Transverse colon (tissue), 4 donors: ENCODE measurements at regions of chr7 and their contacts with region 1.

Region 1: GRCh38 chr7:18345641-18346234 is 149.8 kb upstream of the HDAC9 start:
- DNase-seq: peak; percentile 33
- H3K4me3 ChIP-seq: no peak overlapping the region
- H3K27ac ChIP-seq: no peak overlapping the region
- H3K4me1 ChIP-seq: no peaks in the 10 kb centered on the region
- H3K27me3 ChIP-seq: no peaks in the 10 kb centered on the region
- CTCF ChIP-seq: peak; percentile 74 to 84 (median 79)
- EP300 ChIP-seq: no peak
- POLR2A ChIP-seq: no peak

Region 2: GRCh38 chr7:17275749-17276671 is 1069.7 kb before region 1 on chr7:
- in situ Hi-C with region 1: no loop called
- intact Hi-C with region 1: no loop called
- DNase-seq: no peak
- H3K4me3 ChIP-seq: no peak overlapping the region
- H3K27ac ChIP-seq: peak overlapping the region; percentile 28 to 42 (median 38)
- H3K4me1 ChIP-seq: peaks cover 0 to 10% (median 3%) of the 10 kb centered on the region in 4 donors
- H3K27me3 ChIP-seq: no peaks in the 10 kb centered on the region
- CTCF ChIP-seq: no peak
- EP300 ChIP-seq: no peak
- POLR2A ChIP-seq: no peak

Region 3: GRCh38 chr7:17706734-17707133 is 639.0 kb before region 1 on chr7:
- in situ Hi-C with region 1: loop called in 1 of 4 experiments (anchors 25 kb)
- intact Hi-C with region 1: no loop called
- DNase-seq: peak; percentile 16
- H3K4me3 ChIP-seq: no peak overlapping the region
- H3K27ac ChIP-seq: no peak overlapping the region
- H3K4me1 ChIP-seq: no peaks in the 10 kb centered on the region
- H3K27me3 ChIP-seq: no peaks in the 10 kb centered on the region
- CTCF ChIP-seq: peak; percentile 21 to 45 (median 28)
- EP300 ChIP-seq: no peak
- POLR2A ChIP-seq: no peak

Region 4: GRCh38 chr7:17952387-17952786 is 393.4 kb before region 1 on chr7:
- in situ Hi-C with region 1: loop called in 1 of 4 experiments (anchors 25 kb)
- intact Hi-C with region 1: no loop called
- DNase-seq: no peak
- H3K4me3 ChIP-seq: no peak overlapping the region
- H3K27ac ChIP-seq: no peak overlapping the region
- H3K4me1 ChIP-seq: peaks cover 0 to 7% (median 0%) of the 10 kb centered on the region in 4 donors
- H3K27me3 ChIP-seq: no peaks in the 10 kb centered on the region
- CTCF ChIP-seq: no peak
- EP300 ChIP-seq: no peak
- POLR2A ChIP-seq: no peak

Region 5: DNA sequence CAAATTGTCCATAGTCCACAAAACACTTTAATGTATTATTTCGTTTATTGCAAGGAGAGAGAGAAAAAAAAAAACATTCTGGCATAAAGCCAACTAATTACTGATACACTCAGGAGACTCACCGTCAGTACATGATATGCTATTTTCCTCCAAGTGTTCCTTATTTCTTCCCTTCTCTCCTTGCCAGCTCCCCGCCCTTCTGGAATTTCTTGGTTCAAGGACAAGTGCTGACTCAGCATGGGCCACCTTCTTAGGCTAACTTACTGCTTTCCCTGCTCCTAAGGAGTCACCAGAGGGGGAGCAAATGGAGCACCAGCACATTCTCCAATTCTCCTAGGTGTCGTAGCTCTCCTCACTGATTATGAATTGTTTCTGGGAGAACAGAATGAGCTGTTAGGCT is 16.0 kb after region 1 on chr7:
- in situ Hi-C with region 1: no loop called
- intact Hi-C with region 1: no loop called
- DNase-seq: peak; percentile 55
- H3K4me3 ChIP-seq: no peak overlapping the region
- H3K27ac ChIP-seq: no peak overlapping the region
- H3K4me1 ChIP-seq: peaks cover 0 to 8% (median 3%) of the 10 kb centered on the region in 4 donors
- H3K27me3 ChIP-seq: no peaks in the 10 kb centered on the region
- CTCF ChIP-seq: no peak
- EP300 ChIP-seq: no peak
- POLR2A ChIP-seq: no peak

Region 6: GRCh38 chr7:18675579-18675978 is 329.8 kb after region 1 on chr7:
- in situ Hi-C with region 1: loop called in 2 of 4 experiments (anchors 5 to 25 kb)
- intact Hi-C with region 1: no loop called
- DNase-seq: no peak
- H3K4me3 ChIP-seq: no peak overlapping the region
- H3K27ac ChIP-seq: no peak overlapping the region
- H3K4me1 ChIP-seq: no peaks in the 10 kb centered on the region
- H3K27me3 ChIP-seq: no peaks in the 10 kb centered on the region
- CTCF ChIP-seq: no peak
- EP300 ChIP-seq: no peak
- POLR2A ChIP-seq: no peak